A549 (cell line): ENCODE measurements at regions of chr3 and their contacts with region 1.

Region 1: GRCh38 chr3:99850608-99851007 is 32.9 kb downstream of the CMSS1 start:
- DNase-seq: no peak
- ATAC-seq: no peak
- H3K4me3 ChIP-seq: no peak overlapping the region
- H3K27ac ChIP-seq: no peak overlapping the region
- H3K4me1 ChIP-seq: no peaks in the 10 kb centered on the region
- CTCF ChIP-seq: no peak
- EP300 ChIP-seq: no peak
- POLR2A ChIP-seq: no peak
- RAD21 ChIP-seq: no peak

Region 2: GRCh38 chr3:99817437-99818240 is 33.0 kb before region 1 on chr3 and contains the start of gene CMSS1:
- CTCF ChIA-PET with region 1: no interaction called
- POLR2A ChIA-PET with region 1: no interaction called
- DNase-seq: peak; percentile 78 to 94
- ATAC-seq: peak; percentile 96 to 98
- H3K4me3 ChIP-seq: peak within 1 kb of the TSS; percentile 62
- H3K27ac ChIP-seq: peak within 1 kb of the TSS; percentile 78 to 88
- H3K4me1 ChIP-seq: peaks cover 6% of the 10 kb centered on the region; the same call in 2 of the 3 replicates
- CTCF ChIP-seq: no peak
- EP300 ChIP-seq: no peak
- POLR2A ChIP-seq: peak; percentile 83
- RAD21 ChIP-seq: no peak
- polyA plus RNA-seq, gene CMSS1: 48.1 and 62.9 TPM in 2 replicates

Region 3: GRCh38 chr3:99875929-99876841 is 25.6 kb after region 1 on chr3:
- CTCF ChIA-PET with region 1: no interaction called
- POLR2A ChIA-PET with region 1: no interaction called
- DNase-seq: peak; percentile 20 to 36
- ATAC-seq: peak; percentile 92 to 96
- H3K4me3 ChIP-seq: peak overlapping the region; percentile 37
- H3K27ac ChIP-seq: peak overlapping the region; percentile 12 to 74; a peak in 5 of 6 replicates
- H3K4me1 ChIP-seq: peaks cover 30% of the 10 kb centered on the region
- CTCF ChIP-seq: no peak
- EP300 ChIP-seq: no peak
- POLR2A ChIP-seq: no peak
- RAD21 ChIP-seq: no peak

Region 4: DNA sequence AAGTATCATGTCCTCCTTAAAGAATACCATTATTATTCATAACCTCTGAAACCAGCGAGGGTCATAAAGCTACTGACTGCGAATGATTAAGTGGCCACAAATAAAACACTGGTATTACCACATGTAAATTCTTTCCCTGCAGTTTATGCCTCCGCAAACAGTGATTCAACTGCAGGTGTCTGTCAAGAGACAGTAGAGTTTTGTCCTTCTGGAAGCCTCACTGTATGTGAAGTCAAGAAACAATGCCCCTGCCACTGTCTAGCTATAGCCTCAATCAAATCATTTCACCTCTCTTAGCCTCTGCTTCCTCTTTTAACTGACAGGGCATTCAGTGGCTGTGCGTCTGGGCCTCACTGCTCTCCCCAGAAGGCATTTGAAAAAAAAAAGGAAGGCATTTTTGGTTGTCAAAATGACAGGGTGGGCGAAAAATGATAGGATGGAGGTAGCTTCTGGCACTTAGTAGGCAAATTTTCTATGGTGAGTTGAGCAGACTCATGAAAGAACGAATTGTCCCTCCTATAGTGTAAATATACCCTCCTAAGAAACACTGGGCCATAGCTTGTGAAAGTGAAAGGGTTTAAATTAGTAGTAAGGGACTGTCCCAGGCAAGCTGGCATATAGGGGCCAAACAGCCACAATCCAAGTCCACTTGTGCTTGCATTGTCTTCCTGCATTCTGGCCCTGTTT is 197.0 kb after region 1 on chr3:
- CTCF ChIA-PET with region 1: no interaction called
- POLR2A ChIA-PET with region 1: no interaction called
- DNase-seq: peak; percentile 12 to 65
- ATAC-seq: peak; percentile 83 to 90
- H3K4me3 ChIP-seq: no peak overlapping the region
- H3K27ac ChIP-seq: peak overlapping the region; percentile 72 to 73
- H3K4me1 ChIP-seq: peaks cover 43% of the 10 kb centered on the region
- CTCF ChIP-seq: no peak
- EP300 ChIP-seq: peak in 1 of 2 experiments; percentile 30; a peak in 2 of 5 replicates
- POLR2A ChIP-seq: no peak
- RAD21 ChIP-seq: peak in 1 of 2 experiments; percentile 39; a peak in 1 of 5 replicates

Region 5: DNA sequence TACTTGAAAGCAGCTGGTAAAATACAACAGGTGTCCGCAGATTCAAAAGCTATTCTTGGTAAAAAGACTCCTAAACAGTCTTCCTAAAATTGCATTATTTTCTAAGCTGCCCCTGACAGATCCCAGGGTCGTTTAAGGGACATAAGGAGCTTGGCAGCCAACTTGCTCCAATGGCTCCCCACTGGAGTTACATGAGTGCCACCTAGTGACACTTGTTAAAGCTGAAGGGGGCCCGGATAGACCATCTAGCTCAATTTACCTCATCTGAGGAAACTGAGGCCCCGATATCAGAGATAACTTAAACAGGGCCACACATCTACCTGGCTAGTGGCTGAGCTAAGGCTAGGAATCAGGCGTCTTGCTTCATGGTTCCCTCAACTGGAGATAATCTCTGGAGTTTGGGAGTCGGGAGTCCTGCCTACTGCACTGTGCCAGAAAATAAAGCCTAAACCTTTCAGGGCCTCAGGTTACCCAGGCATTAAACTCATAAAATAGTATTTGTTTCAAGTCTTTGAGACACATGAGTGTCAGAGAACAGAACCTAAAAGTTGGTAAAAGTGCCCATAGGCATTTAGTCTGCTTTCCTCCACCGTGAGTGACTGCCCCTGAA is 403.7 kb after region 1 on chr3:
- CTCF ChIA-PET with region 1: interaction called, 18 read pairs
- POLR2A ChIA-PET with region 1: no interaction called
- DNase-seq: peak; percentile 42 to 65
- ATAC-seq: peak; percentile 88 to 97
- H3K4me3 ChIP-seq: no peak overlapping the region
- H3K27ac ChIP-seq: no peak overlapping the region
- H3K4me1 ChIP-seq: no peaks in the 10 kb centered on the region
- CTCF ChIP-seq: peak; percentile 88
- EP300 ChIP-seq: no peak
- POLR2A ChIP-seq: no peak
- RAD21 ChIP-seq: peak; percentile 95 to 96